ENCODE measurements at regions of chr4 and their contacts with region 1.

Region 1: GRCh38 chr4:173415885-173416653 is 17.2 kb upstream of the SCRG1 start:
- DNase-seq: no peak
- ATAC-seq: peak in 1 of 2 experiments; percentile 18; a peak in 1 of 6 replicates
- H3K4me3 ChIP-seq: no peak overlapping the region
- H3K27ac ChIP-seq: no peak overlapping the region
- H3K4me1 ChIP-seq: no peaks in the 10 kb centered on the region
- CTCF ChIP-seq: no peak
- EP300 ChIP-seq: no peak
- POLR2A ChIP-seq: no peak
- RAD21 ChIP-seq: no peak

Region 2: GRCh38 chr4:173318648-173319211 is 97.3 kb before region 1 on chr4:
- CTCF ChIA-PET with region 1: interaction called, 18 read pairs
- POLR2A ChIA-PET with region 1: no interaction called
- DNase-seq: peak in 1 of 2 experiments; percentile 13
- ATAC-seq: no peak
- H3K4me3 ChIP-seq: no peak overlapping the region
- H3K27ac ChIP-seq: no peak overlapping the region
- H3K4me1 ChIP-seq: peaks cover 8% of the 10 kb centered on the region; the same call in 1 of the 3 replicates
- CTCF ChIP-seq: peak; percentile 51; the same call in 2 of the 3 replicates
- EP300 ChIP-seq: no peak
- POLR2A ChIP-seq: no peak
- RAD21 ChIP-seq: peak; percentile 22 to 53; a peak in 3 of 5 replicates